Activated CD4-positive, alpha-beta T cell treated with anti-CD3 and anti-CD28 coated beads for 36 hours (primary cell): ENCODE measurements at regions of chr2 and their contacts with region 1.

Region 1: GRCh38 chr2:134892282-134893070 is 26.1 kb upstream of the CCNT2 start:
- DNase-seq: no peak
- ATAC-seq: no peak
- H3K4me3 Mint-ChIP-seq: no peak overlapping the region
- H3K27ac Mint-ChIP-seq: no peak overlapping the region
- H3K4me1 Mint-ChIP-seq: no peaks in the 10 kb centered on the region
- H3K27me3 Mint-ChIP-seq: no peaks in the 10 kb centered on the region

Region 2: GRCh38 chr2:134527381-134527780 is 365.1 kb before region 1 on chr2:
- CTCF ChIA-PET with region 1: no interaction called
- POLR2A ChIA-PET with region 1: no interaction called
- intact Hi-C with region 1: no loop called
- DNase-seq: no peak
- ATAC-seq: no peak
- H3K4me3 Mint-ChIP-seq: no peak overlapping the region
- H3K27ac Mint-ChIP-seq: no peak overlapping the region
- H3K4me1 Mint-ChIP-seq: no peaks in the 10 kb centered on the region
- H3K27me3 Mint-ChIP-seq: no peaks in the 10 kb centered on the region

Region 3: DNA sequence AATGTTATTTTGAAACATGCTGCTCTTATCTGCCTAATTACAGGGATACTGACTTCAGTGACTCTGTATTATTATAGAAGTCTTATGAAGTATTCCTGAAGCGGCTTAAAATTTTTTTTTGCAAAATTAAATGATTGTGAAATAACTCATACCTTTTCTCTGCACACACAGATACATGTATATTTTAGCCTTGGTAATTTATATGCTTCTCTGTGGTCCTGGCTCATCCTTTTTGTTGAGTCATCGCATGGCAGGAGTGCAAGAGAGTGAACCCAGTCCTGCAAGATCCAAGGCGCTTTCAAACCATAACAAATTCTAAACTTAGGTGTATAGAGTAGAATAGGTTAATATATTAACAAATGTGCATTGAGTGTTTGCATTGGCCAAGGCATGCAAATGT is 34.7 kb after region 1 on chr2:
- CTCF ChIA-PET with region 1: no interaction called
- POLR2A ChIA-PET with region 1: interaction called, 11 read pairs
- intact Hi-C with region 1: no loop called
- DNase-seq: no peak
- ATAC-seq: peak; percentile 63
- H3K4me3 Mint-ChIP-seq: no peak overlapping the region
- H3K27ac Mint-ChIP-seq: peak overlapping the region; percentile 14
- H3K4me1 Mint-ChIP-seq: peaks cover 72% of the 10 kb centered on the region
- H3K27me3 Mint-ChIP-seq: no peaks in the 10 kb centered on the region

Region 4: DNA sequence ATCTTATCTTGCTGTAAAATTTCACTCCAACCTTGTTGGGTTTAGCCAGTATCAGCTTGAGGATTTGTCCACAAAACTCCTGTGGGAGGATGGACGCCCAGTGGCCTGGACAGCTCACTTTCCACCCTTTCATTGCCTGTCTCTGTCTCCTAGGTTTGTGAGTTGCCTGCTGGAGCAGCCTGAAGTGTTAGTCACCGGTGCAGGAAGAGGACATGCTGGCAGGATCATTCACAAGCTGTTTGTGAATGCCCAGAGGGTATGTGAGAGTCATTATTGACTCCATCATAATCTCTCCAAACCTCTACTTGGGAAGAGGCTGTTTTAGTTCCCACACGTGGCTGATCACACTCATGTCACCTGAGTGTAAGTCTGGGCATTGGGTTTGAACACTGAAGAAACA is 272.0 kb after region 1 on chr2:
- CTCF ChIA-PET with region 1: no interaction called
- POLR2A ChIA-PET with region 1: no interaction called
- intact Hi-C with region 1: no loop called
- DNase-seq: no peak
- ATAC-seq: no peak
- H3K4me3 Mint-ChIP-seq: no peak overlapping the region
- H3K27ac Mint-ChIP-seq: no peak overlapping the region
- H3K4me1 Mint-ChIP-seq: peaks cover 9% of the 10 kb centered on the region
- H3K27me3 Mint-ChIP-seq: no peaks in the 10 kb centered on the region